Naive thymus-derived CD4-positive, alpha-beta T cell (primary cell): ENCODE measurements at regions of chr3 and their contacts with region 1.

Region 1: DNA sequence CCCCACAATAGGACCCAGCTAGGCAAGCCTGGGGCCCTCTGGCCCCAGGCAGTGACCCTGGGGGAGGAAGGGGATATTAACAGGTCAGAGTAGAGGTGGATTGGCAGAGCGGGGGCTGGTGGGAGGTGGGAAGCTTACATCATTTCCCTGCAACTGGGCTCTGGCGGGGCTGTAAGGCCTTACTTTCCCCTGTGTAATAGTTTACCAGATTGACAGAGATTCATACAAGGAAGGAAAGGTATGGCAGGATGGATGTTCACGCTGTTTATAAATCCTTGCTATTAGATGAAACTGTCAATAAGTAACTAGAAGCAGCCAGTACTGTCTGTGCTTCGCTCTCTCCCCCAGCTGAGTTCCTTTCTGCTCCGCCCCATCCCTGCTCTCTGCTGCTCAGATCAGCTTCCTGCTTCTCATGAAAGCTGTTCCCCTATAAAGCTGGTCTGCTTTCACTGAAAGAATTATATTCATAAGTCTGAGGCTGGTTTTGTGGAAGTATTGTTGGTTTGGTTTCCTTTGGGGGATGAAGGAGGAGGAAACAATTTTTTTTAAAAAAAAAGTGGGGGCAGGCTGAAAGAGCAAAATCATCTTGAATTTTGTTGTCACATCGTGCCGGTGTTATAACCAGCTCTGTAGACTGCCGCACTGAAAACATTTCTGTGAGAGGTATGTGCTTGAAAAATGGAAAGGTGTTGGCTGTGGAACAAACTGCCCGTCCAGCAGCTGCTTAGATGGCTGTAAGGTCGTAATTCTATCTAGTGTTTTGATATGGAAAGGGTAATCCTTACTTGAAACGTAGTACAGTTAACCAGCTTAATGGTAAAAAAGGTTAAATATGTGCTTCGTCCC is 76.4 kb downstream of the BBX start:
- DNase-seq: peak in 8 of 9 donors; percentile 36 to 59 (median 50)
- ATAC-seq: peak; percentile 93
- H3K4me3 ChIP-seq: peak overlapping the region; percentile 56
- H3K4me3 Mint-ChIP-seq: peak overlapping the region; percentile 79 to 91 (median 86)
- H3K27ac ChIP-seq: peak overlapping the region; percentile 76
- H3K27ac Mint-ChIP-seq: peak overlapping the region; percentile 80 to 90 (median 87)
- H3K4me1 ChIP-seq: peaks cover 24 to 39% of the 10 kb centered on the region in 2 donors
- H3K4me1 Mint-ChIP-seq: peaks cover 45 to 81% (median 72%) of the 10 kb centered on the region in 7 donors
- H3K27me3 ChIP-seq: no peaks in the 10 kb centered on the region
- H3K27me3 Mint-ChIP-seq: no peaks in the 10 kb centered on the region

Region 2: DNA sequence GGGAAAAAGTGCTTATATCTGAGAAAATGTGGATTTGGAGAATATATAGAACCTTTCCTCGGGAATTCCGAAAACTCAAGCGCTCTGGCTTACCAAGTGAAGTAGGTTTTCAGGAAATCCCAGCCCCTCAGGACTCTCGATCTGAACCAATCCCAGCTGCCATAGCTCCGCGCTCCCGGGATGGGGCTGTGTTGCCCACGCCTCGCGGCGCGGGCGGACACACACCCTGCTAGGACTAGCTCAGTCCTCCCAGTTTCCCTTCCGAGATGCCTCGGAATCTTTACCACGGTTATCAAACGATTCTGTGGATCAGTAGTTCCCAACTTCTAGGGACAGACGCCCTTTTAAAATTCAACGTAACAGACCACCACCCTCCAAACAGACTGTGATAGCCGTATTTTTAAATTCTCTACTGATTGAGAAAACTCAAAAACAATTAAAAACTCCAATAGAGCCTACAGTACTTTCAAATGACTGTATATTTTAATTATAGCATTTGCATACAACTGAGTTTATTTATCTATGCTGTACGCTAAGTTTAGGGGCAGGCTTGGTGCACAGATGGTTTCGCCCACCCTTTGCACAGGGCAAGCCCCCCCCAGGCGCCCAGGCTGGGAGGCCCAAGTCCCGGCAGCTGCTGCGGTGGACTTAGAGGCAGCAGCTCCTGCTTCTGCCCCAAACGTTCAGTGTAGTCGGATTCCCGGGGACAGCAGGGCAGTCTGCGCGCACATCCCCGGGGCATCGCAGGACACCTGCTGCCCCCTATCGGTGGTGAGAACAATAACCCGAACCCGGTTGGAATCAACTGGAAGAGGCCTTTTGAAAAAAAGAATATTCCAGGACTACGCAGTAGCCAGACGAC is 169.6 kb before region 1 on chr3:
- CTCF ChIA-PET with region 1: no interaction called
- POLR2A ChIA-PET with region 1: no interaction called
- intact Hi-C with region 1: loop called in 1 of 2 experiments (anchors 5 kb)
- DNase-seq: peak; percentile 33 to 72 (median 61)
- ATAC-seq: peak; percentile 77
- H3K4me3 ChIP-seq: peak overlapping the region; percentile 76
- H3K4me3 Mint-ChIP-seq: peak overlapping the region; percentile 81 to 95 (median 90)
- H3K27ac ChIP-seq: no peak overlapping the region
- H3K27ac Mint-ChIP-seq: peak overlapping the region in 3 of 9 donors; percentile 25 to 80 (median 38)
- H3K4me1 ChIP-seq: peaks cover 11 to 12% of the 10 kb centered on the region in 2 donors
- H3K4me1 Mint-ChIP-seq: peaks cover 0 to 27% (median 13%) of the 10 kb centered on the region in 7 donors
- H3K27me3 ChIP-seq: no peaks in the 10 kb centered on the region
- H3K27me3 Mint-ChIP-seq: peaks cover 0 to 61% (median 0%) of the 10 kb centered on the region in 5 donors

Region 3: DNA sequence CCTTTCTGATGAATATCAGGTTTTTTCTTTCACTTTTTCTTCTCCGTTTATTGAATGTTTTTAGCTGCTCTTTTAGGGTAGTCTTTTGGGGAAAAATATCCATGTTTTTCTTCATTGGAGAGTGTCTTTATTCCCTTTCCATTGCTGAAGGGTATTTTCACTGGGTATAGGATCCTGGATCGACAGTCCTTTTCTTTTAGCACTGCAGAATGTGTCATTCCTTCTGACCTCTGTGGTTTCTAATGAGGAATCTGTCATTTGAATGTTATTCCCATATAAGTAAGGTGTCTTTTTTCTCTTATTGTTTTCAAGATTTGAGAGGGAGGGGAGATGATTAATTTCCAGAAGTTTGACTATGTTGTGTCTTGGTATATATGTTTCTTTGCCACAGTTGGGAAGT is 20.4 kb after region 1 on chr3:
- CTCF ChIA-PET with region 1: no interaction called
- POLR2A ChIA-PET with region 1: interaction called, 3 read pairs
- intact Hi-C with region 1: loop called in 1 of 2 experiments (anchors 2 kb)
- DNase-seq: no peak
- ATAC-seq: no peak
- H3K4me3 ChIP-seq: no peak overlapping the region
- H3K4me3 Mint-ChIP-seq: peak overlapping the region in 4 of 10 donors; percentile 8 to 23 (median 12)
- H3K27ac ChIP-seq: no peak overlapping the region
- H3K27ac Mint-ChIP-seq: peak overlapping the region in 1 of 9 donors; percentile 20
- H3K4me1 ChIP-seq: no peaks in the 10 kb centered on the region
- H3K4me1 Mint-ChIP-seq: peaks cover 10 to 88% (median 80%) of the 10 kb centered on the region in 7 donors
- H3K27me3 ChIP-seq: no peaks in the 10 kb centered on the region
- H3K27me3 Mint-ChIP-seq: no peaks in the 10 kb centered on the region

Region 4: DNA sequence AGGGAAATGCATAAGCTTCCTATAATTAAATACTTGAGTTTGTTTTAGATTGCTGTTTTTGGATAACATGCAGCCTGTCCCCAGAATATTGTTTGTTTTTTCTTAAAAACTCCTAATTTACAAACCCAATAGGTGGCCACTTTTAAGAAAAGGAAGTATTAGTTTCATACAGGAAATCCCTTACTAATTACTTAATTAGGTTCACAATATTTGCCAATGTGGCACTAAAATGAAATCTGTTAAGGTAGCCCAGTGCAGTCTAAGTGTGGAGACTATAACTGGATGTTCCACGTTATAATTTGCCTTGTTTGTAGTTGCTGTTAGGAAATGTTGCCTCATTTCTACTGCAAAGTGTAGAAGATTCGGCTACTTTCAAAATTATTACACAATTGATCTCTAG is 119.4 kb after region 1 on chr3:
- CTCF ChIA-PET with region 1: no interaction called
- POLR2A ChIA-PET with region 1: no interaction called
- intact Hi-C with region 1: no loop called
- DNase-seq: no peak
- ATAC-seq: no peak
- H3K4me3 ChIP-seq: no peak overlapping the region
- H3K4me3 Mint-ChIP-seq: no peak overlapping the region
- H3K27ac ChIP-seq: no peak overlapping the region
- H3K27ac Mint-ChIP-seq: no peak overlapping the region
- H3K4me1 ChIP-seq: no peaks in the 10 kb centered on the region
- H3K4me1 Mint-ChIP-seq: peaks cover 0 to 12% (median 8%) of the 10 kb centered on the region in 7 donors
- H3K27me3 ChIP-seq: no peaks in the 10 kb centered on the region
- H3K27me3 Mint-ChIP-seq: no peaks in the 10 kb centered on the region

Region 5: GRCh38 chr3:107999215-107999775 is 400.1 kb after region 1 on chr3:
- CTCF ChIA-PET with region 1: no interaction called
- POLR2A ChIA-PET with region 1: no interaction called
- intact Hi-C with region 1: no loop called
- DNase-seq: no peak
- ATAC-seq: no peak
- H3K4me3 ChIP-seq: no peak overlapping the region
- H3K4me3 Mint-ChIP-seq: no peak overlapping the region
- H3K27ac ChIP-seq: no peak overlapping the region
- H3K27ac Mint-ChIP-seq: no peak overlapping the region
- H3K4me1 ChIP-seq: no peaks in the 10 kb centered on the region
- H3K4me1 Mint-ChIP-seq: peaks cover 0 to 6% (median 0%) of the 10 kb centered on the region in 7 donors
- H3K27me3 ChIP-seq: no peaks in the 10 kb centered on the region
- H3K27me3 Mint-ChIP-seq: peaks cover 0 to 12% (median 0%) of the 10 kb centered on the region in 5 donors

Region 6: DNA sequence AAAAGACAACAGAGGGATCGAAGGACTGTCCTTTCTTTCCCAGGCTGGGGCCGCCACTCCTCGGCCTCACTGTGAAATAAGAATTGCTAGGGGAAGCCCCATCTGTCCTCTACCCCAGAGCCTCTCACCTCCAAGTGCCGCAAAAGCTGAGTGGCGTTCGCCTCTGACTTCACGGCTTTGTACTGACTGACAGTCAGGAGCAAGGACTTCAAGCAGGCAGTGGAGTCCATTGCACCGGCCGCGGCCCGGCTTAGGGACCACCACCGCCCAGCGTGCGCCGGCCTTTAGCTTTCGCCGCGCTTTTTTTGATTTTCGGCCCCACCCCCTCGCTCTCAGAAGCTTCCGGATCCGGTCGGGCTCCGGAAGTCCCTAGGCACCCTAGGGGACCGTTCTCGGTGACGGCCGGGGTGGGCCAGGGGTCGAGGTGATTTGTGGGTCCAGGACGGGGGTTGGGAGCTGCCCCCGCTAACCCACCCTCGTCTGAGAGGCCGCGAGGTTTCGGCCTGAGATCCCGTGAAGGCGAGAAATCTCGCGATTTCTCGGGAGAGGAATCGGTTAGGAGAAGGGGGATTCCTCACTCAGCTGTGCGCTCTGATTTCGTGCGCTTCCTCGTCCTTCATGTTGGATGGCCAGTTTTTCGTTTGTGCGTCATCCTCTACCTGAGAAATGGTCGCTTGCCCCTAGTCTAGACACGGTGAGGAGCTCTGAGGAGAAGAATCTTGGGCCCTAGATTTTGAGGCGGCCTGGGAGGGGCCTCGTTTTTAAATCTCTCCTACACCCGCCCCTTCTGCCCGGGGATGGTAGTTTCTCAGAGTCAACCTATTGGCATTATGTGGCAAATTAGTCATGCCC is 990.2 kb after region 1 on chr3 and contains the starts of genes CIP2A and DZIP3:
- CTCF ChIA-PET with region 1: no interaction called
- POLR2A ChIA-PET with region 1: no interaction called
- intact Hi-C with region 1: loop called in 1 of 2 experiments (anchors 10 kb)
- DNase-seq: peak; percentile 74 to 88 (median 82)
- ATAC-seq: peak; percentile 83
- H3K4me3 ChIP-seq: peak within 1 kb of the TSS; percentile 87
- H3K4me3 Mint-ChIP-seq: peak within 1 kb of the TSS; percentile 94 to 99 (median 98)
- H3K27ac ChIP-seq: peak within 1 kb of the TSS; percentile 92
- H3K27ac Mint-ChIP-seq: peak within 1 kb of the TSS; percentile 95 to 100 (median 99)
- H3K4me1 ChIP-seq: peaks cover 11 to 15% of the 10 kb centered on the region in 2 donors
- H3K4me1 Mint-ChIP-seq: peaks cover 12 to 53% (median 39%) of the 10 kb centered on the region in 7 donors
- H3K27me3 ChIP-seq: no peaks in the 10 kb centered on the region
- H3K27me3 Mint-ChIP-seq: no peaks in the 10 kb centered on the region
- total RNA-seq, gene CIP2A: 3.4 to 44.2 (median 4.1) TPM
- total RNA-seq, gene DZIP3: 9.6 to 17.3 (median 14.6) TPM

Region 7: DNA sequence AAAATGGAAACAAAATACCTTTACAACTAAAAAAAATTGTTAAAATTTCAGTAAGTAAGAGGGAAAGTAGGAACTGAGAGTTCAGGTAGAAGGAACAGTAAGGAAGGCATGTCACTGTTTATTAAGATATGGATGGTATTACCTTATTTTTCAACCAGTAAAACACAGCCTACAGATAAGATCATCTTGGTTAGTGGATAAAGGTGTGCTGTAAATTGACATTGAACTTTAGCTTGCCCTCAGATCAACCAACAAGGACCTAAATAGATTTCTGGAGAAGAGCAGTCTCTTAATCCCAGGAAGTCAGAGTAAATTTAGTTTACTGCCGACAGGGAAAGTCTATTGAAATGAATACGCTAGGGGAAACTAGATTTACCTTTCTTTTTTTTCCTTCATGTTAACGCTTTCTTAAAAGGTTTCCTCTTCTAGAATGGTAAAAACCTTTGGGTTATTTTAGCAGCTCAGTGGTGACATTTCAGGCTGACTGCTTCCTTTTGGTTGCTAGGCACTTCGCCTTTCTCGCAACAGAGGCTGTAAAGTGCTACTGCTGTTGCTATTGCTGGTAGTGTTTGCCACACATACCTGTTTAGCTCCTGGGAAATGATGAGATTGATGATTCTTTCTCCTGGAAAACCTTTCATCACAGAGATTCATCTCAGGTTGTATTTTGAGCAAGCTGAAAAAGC is 1003.2 kb after region 1 on chr3:
- CTCF ChIA-PET with region 1: no interaction called
- POLR2A ChIA-PET with region 1: no interaction called
- intact Hi-C with region 1: loop called in 1 of 2 experiments (anchors 5 kb)
- DNase-seq: peak in 7 of 9 donors; percentile 34 to 74 (median 57)
- ATAC-seq: peak; percentile 92
- H3K4me3 ChIP-seq: peak overlapping the region; percentile 22
- H3K4me3 Mint-ChIP-seq: peak overlapping the region; percentile 25 to 81 (median 74)
- H3K27ac ChIP-seq: peak overlapping the region; percentile 69
- H3K27ac Mint-ChIP-seq: peak overlapping the region; percentile 76 to 97 (median 93)
- H3K4me1 ChIP-seq: peaks cover 38 to 46% of the 10 kb centered on the region in 2 donors
- H3K4me1 Mint-ChIP-seq: peaks cover 27 to 64% (median 54%) of the 10 kb centered on the region in 7 donors
- H3K27me3 ChIP-seq: no peaks in the 10 kb centered on the region
- H3K27me3 Mint-ChIP-seq: no peaks in the 10 kb centered on the region